Activated CD4-positive, alpha-beta T cell treated with anti-CD3 and anti-CD28 coated beads for 36 hours (primary cell): ENCODE measurements at regions of chr3 and their contacts with region 1.

Region 1: GRCh38 chr3:105130911-105131310 is 235.8 kb upstream of the ALCAM start:
- DNase-seq: no peak
- ATAC-seq: no peak
- H3K4me3 Mint-ChIP-seq: no peak overlapping the region
- H3K27ac Mint-ChIP-seq: no peak overlapping the region
- H3K4me1 Mint-ChIP-seq: no peaks in the 10 kb centered on the region
- H3K27me3 Mint-ChIP-seq: no peaks in the 10 kb centered on the region

Region 2: DNA sequence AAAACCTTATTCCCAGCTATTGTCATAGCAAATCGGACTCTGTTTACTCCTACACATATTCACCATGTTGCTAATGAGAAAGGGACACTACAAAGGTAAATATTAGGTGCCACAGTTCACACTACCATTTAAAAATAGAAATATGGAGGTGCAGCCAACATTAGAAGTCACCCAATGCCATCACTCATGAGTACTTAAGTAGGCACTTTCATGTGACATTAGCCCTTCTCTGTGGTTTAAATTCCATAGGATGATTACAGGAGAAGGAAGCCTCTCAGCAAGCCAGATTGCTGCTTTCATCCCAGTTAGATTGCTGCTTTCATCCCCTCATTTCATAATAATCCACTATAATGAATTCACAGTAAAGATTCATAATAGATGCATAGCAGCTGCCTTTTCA is 141.0 kb before region 1 on chr3:
- CTCF ChIA-PET with region 1: no interaction called
- POLR2A ChIA-PET with region 1: no interaction called
- intact Hi-C with region 1: no loop called
- DNase-seq: no peak
- ATAC-seq: no peak
- H3K4me3 Mint-ChIP-seq: no peak overlapping the region
- H3K27ac Mint-ChIP-seq: no peak overlapping the region
- H3K4me1 Mint-ChIP-seq: no peaks in the 10 kb centered on the region
- H3K27me3 Mint-ChIP-seq: no peaks in the 10 kb centered on the region

Region 3: GRCh38 chr3:105103139-105103538 is 27.8 kb before region 1 on chr3:
- CTCF ChIA-PET with region 1: no interaction called
- POLR2A ChIA-PET with region 1: no interaction called
- intact Hi-C with region 1: loop called in 1 of 2 experiments (anchors 1 kb)
- DNase-seq: no peak
- ATAC-seq: no peak
- H3K4me3 Mint-ChIP-seq: no peak overlapping the region
- H3K27ac Mint-ChIP-seq: no peak overlapping the region
- H3K4me1 Mint-ChIP-seq: no peaks in the 10 kb centered on the region
- H3K27me3 Mint-ChIP-seq: peaks cover 2% of the 10 kb centered on the region

Region 4: GRCh38 chr3:105154699-105155098 is 23.8 kb after region 1 on chr3:
- CTCF ChIA-PET with region 1: no interaction called
- POLR2A ChIA-PET with region 1: no interaction called
- intact Hi-C with region 1: no loop called
- DNase-seq: no peak
- ATAC-seq: no peak
- H3K4me3 Mint-ChIP-seq: no peak overlapping the region
- H3K27ac Mint-ChIP-seq: no peak overlapping the region
- H3K4me1 Mint-ChIP-seq: no peaks in the 10 kb centered on the region
- H3K27me3 Mint-ChIP-seq: peaks cover 2% of the 10 kb centered on the region